ENCODE measurements at regions of chr19 and their contacts with region 1.

Region 1: DNA sequence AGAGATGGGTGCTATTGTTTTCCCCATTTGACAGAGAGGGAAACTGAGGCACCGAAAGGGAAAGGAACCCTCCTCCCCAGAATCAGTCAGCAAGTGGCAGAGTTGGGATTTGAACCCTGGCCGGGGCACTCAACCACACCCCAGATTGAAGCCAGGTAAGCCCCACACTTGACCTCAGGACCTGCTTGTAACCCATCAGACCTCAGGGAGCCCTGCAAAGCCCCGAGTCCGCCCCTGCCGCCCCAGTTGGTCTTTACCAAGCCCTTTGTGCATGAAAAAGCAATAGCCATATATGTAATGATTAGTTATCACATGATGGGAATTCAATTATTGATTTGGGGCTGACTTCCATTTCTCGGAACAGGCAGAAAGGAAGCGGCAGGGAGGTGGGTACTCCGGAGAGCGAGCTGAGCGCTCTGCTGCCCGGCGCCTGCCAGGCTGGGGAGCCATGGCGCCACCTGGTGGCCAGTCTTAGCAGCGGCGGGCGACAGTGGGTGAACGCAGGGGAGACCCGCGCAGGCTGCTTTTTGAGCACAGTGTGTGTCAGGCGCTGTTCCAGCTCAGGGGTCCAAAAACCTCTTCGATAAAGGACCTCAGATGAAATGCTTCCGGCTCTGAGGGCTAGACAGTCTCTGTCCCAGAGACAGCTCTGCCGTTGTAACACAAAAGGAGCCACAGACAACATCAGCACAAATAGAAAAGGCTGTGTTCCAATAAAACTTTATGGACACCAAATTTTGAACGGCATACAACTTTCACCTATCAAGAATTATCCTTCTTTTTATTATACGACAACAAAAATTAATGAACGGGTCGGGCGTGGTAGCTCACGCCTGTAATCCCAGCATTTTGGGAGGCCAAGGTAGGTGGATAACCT is 82.9 kb upstream of the CACNA1A start:
- ATAC-seq: peak; percentile 96 to 100 (median 98)
- H3K4me3 ChIP-seq: peak overlapping the region in 1 of 5 donors; percentile 14
- H3K27ac ChIP-seq: no peak overlapping the region
- H3K4me1 ChIP-seq: no peaks in the 10 kb centered on the region

Region 2: DNA sequence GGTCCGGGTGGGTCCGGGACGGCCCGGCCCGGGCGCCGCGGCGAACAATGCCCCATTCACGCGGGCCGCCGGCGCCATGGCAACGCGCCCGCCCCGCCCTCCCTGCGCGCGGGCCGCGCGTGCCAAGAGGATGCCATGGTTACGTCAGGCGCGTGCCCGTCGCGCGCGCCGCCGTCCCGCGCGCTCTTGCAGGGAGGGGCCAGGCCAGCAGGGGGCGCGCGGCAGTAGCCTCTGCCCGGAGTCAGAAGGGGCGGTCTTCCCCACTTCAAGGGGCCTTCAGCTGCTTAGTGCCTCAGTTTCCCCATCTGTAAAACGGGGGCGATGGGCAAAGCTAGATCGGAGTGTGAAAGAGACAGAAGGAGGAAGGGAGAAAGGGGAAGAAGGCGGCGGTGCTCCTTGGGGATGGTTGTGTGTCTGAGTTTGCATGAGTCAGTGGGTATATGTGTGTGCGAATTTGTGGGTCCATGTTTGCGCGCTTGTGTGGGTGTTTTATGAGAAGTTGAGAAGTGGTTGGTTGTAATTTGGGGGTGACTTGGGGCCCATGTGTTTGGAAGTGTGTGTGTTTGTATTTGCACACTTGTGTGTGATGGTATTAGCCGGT is 605.6 kb before region 1 on chr19:
- in situ Hi-C with region 1: loop called in 1 of 9 experiments (anchors 25 kb)
- ATAC-seq: peak; percentile 41 to 89 (median 52)
- H3K4me3 ChIP-seq: peak overlapping the region; percentile 13 to 25 (median 19)
- H3K27ac ChIP-seq: no peak overlapping the region
- H3K4me1 ChIP-seq: peaks cover 7 to 19% of the 10 kb centered on the region in 2 donors

Region 3: GRCh38 chr19:13262450-13262849 is 326.7 kb before region 1 on chr19:
- in situ Hi-C with region 1: loop called in 1 of 9 experiments (anchors 25 kb)
- ATAC-seq: peak; percentile 15 to 69 (median 46)
- H3K4me3 ChIP-seq: no peak overlapping the region
- H3K27ac ChIP-seq: no peak overlapping the region
- H3K4me1 ChIP-seq: peaks cover 0 to 2% of the 10 kb centered on the region in 2 donors

Region 4: DNA sequence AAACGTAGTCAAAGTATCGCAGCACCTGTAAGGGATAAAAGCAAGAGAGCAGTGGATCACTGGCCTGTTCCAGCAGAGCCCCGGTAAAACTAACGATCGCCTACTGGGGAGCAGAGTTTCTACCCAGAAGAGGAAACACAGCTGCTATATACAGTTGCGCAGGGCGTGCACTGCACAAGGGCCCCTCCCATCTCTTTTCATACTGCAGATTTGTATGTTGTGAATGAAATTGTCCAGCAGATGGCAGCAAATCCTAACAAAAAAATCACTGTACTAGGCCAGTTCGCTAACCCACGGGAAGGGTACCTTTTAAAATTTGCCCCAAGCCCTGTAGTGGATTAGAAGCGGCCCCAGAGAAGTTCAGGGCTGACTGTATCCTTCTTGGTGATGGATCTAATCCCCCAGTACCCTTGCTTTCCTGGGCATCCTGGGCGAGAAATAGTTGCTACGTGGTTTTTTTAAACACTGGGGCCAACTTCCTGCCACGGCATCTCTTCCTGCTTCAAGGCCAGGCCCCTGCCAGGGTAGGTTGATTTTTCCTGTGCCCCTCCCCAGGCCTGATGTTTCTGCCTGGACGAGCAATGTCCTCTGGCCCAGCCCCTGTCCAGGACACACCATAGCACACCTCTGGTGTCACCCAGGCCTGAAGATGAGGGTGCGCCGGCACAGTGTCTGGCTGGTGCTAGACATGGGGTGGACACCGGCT is 311.9 kb before region 1 on chr19:
- in situ Hi-C with region 1: loop called in 8 of 9 experiments (anchors 5 to 25 kb)
- ATAC-seq: peak; percentile 82 to 99 (median 86)
- H3K4me3 ChIP-seq: no peak overlapping the region
- H3K27ac ChIP-seq: no peak overlapping the region
- H3K4me1 ChIP-seq: no peaks in the 10 kb centered on the region

Region 5: GRCh38 chr19:13861732-13862531 is 272.7 kb after region 1 on chr19:
- in situ Hi-C with region 1: loop called in 3 of 9 experiments (anchors 10 to 25 kb)
- ATAC-seq: peak; percentile 71 to 86 (median 76)
- H3K4me3 ChIP-seq: peak overlapping the region in 4 of 5 donors; percentile 5 to 14 (median 8)
- H3K27ac ChIP-seq: no peak overlapping the region
- H3K4me1 ChIP-seq: peaks cover 23 to 25% of the 10 kb centered on the region in 2 donors

Region 6: GRCh38 chr19:14073261-14073924 is 484.2 kb after region 1 on chr19:
- in situ Hi-C with region 1: loop called in 1 of 9 experiments (anchors 25 kb)
- ATAC-seq: peak; percentile 68 to 77 (median 72)
- H3K4me3 ChIP-seq: peak overlapping the region; percentile 43 to 83 (median 76)
- H3K27ac ChIP-seq: peak overlapping the region in 1 of 2 donors; percentile 3
- H3K4me1 ChIP-seq: peaks cover 7 to 16% of the 10 kb centered on the region in 2 donors